Heart left ventricle (tissue), 16 donors: ENCODE measurements at regions of chr12 and their contacts with region 1.

Region 1: DNA sequence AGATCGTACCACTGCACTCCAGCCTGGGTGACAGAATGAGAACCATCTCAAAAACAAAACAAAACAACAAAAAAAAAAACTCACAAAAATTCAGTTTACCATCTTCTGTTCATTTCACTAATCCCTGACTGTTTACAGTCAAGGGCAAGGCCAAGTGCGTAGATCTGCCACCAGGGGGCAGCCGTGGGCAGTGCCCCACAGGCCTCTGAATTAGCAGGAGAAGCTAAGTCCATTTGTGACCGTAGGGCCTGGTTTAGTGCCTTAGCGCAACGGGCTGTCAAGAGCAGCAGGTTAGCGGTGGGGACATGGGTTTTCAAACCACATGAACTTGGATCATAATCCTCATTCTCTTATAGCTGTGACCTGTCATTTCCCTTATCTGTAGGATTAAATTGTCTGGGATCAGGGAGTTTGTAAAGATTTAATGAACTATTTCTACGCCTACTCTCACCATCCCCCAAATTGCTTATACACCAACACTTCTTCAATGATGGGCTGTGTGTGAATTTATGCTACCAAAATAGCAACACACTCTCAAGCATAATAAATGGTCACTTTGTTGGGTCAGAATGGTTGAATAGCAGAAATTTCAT is 49.0 kb downstream of the KCTD10 start:
- DNase-seq: peak; percentile 75 to 90 (median 80)
- ATAC-seq: peak; percentile 73 to 92 (median 91)
- H3K4me3 ChIP-seq: no peak overlapping the region
- H3K27ac ChIP-seq: no peak overlapping the region
- H3K4me1 ChIP-seq: peaks cover 0 to 8% (median 6%) of the 10 kb centered on the region in 12 donors
- H3K27me3 ChIP-seq: peaks cover 0 to 4% (median 0%) of the 10 kb centered on the region in 9 donors
- CTCF ChIP-seq: peak; percentile 97 to 99 (median 99)
- POLR2A ChIP-seq: no peak

Region 2: GRCh38 chr12:109458771-109459208 is 30.7 kb after region 1 on chr12:
- intact Hi-C with region 1: no loop called
- DNase-seq: no peak
- ATAC-seq: no peak
- H3K4me3 ChIP-seq: no peak overlapping the region
- H3K27ac ChIP-seq: peak overlapping the region; percentile 8 to 98 (median 96)
- H3K4me1 ChIP-seq: peaks cover 30 to 72% (median 56%) of the 10 kb centered on the region in 12 donors
- H3K27me3 ChIP-seq: no peaks in the 10 kb centered on the region
- CTCF ChIP-seq: no peak
- POLR2A ChIP-seq: no peak

Region 3: GRCh38 chr12:109477185-109477962 is 49.2 kb after region 1 on chr12 and contains the starts of genes KCTD10 and UBE3B:
- intact Hi-C with region 1: loop called (anchors 1 to 5 kb)
- DNase-seq: peak; percentile 91 to 93 (median 92)
- ATAC-seq: peak; percentile 98 to 99 (median 98)
- H3K4me3 ChIP-seq: peak within 1 kb of the TSS; percentile 59 to 92 (median 82)
- H3K27ac ChIP-seq: peak within 1 kb of the TSS; percentile 91 to 99 (median 98)
- H3K4me1 ChIP-seq: peaks cover 12 to 65% (median 43%) of the 10 kb centered on the region in 12 donors
- H3K27me3 ChIP-seq: no peaks in the 10 kb centered on the region
- CTCF ChIP-seq: peak in 4 of 12 donors; percentile 9 to 26 (median 20)
- POLR2A ChIP-seq: peak in 1 of 2 donors; percentile 50
- total RNA-seq, gene KCTD10: 20.8 to 52.3 (median 37.1) TPM
- total RNA-seq, gene UBE3B: 45.7 to 82.7 (median 53.8) TPM

Region 4: GRCh38 chr12:109512608-109513007 is 84.5 kb after region 1 on chr12:
- intact Hi-C with region 1: no loop called
- DNase-seq: no peak
- ATAC-seq: no peak
- H3K4me3 ChIP-seq: no peak overlapping the region
- H3K27ac ChIP-seq: no peak overlapping the region
- H3K4me1 ChIP-seq: peaks cover 0 to 7% (median 0%) of the 10 kb centered on the region in 12 donors
- H3K27me3 ChIP-seq: no peaks in the 10 kb centered on the region
- CTCF ChIP-seq: no peak
- POLR2A ChIP-seq: no peak

Region 5: GRCh38 chr12:109573029-109573913 is 145.1 kb after region 1 on chr12 and contains the starts of genes MMAB and MVK:
- intact Hi-C with region 1: loop called in 1 of 10 experiments (anchors 5 kb)
- DNase-seq: peak; percentile 99
- ATAC-seq: peak; percentile 98 to 99 (median 98)
- H3K4me3 ChIP-seq: peak within 1 kb of the TSS; percentile 60 to 93 (median 74)
- H3K27ac ChIP-seq: peak within 1 kb of the TSS; percentile 47 to 92 (median 82)
- H3K4me1 ChIP-seq: peaks cover 0 to 26% (median 18%) of the 10 kb centered on the region in 12 donors
- H3K27me3 ChIP-seq: no peaks in the 10 kb centered on the region
- CTCF ChIP-seq: no peak
- POLR2A ChIP-seq: peak in 1 of 2 donors; percentile 50
- total RNA-seq, gene MMAB: 29.5 to 43.3 (median 34.4) TPM
- total RNA-seq, gene MVK: 7.9 to 14.9 (median 10.1) TPM

Region 6: DNA sequence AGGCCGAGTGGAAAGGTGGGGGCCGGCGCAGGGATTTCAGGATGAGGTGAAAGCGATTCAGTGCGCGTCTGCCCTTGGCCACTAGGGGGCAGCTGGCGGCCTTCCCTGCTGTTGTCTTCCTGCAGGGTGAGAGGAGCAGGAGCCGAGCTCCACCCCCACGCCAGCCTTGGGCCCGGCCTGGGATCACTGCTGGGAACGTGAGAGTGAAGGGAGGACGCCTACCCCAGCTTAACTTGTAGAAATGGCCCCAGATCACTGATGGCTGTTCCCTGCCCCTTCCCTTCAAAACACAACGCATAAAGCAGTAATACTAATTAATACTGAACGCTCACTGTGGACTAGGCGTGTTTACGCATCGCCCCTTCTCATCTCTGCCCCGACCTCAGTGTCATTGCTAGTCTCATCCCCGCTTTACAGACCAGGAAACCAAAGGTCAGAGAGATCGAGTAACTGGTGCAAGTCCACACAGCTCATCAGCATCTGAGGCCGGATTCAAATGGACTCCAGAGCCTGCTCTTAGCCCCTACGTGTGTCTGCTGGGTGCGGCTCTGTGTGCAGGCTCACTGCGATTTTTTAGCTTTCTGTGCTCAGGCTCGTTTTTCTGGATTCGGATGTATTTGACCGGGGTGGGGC is 169.8 kb after region 1 on chr12:
- intact Hi-C with region 1: loop called in 3 of 10 experiments (anchors 10 kb)
- DNase-seq: peak; percentile 86 to 93 (median 90)
- ATAC-seq: peak; percentile 84 to 90 (median 88)
- H3K4me3 ChIP-seq: no peak overlapping the region
- H3K27ac ChIP-seq: no peak overlapping the region
- H3K4me1 ChIP-seq: peaks cover 0 to 18% (median 6%) of the 10 kb centered on the region in 12 donors
- H3K27me3 ChIP-seq: peaks cover 0 to 2% (median 0%) of the 10 kb centered on the region in 9 donors
- CTCF ChIP-seq: peak; percentile 92 to 98 (median 96)
- POLR2A ChIP-seq: no peak

Region 7: GRCh38 chr12:109775172-109775881 is 347.2 kb after region 1 on chr12:
- intact Hi-C with region 1: loop called (anchors 2 to 10 kb)
- DNase-seq: peak; percentile 67 to 84 (median 68)
- ATAC-seq: peak; percentile 75 to 86 (median 80)
- H3K4me3 ChIP-seq: no peak overlapping the region
- H3K27ac ChIP-seq: no peak overlapping the region
- H3K4me1 ChIP-seq: peaks cover 0 to 16% (median 0%) of the 10 kb centered on the region in 12 donors
- H3K27me3 ChIP-seq: peaks cover 0 to 2% (median 0%) of the 10 kb centered on the region in 9 donors
- CTCF ChIP-seq: peak; percentile 78 to 96 (median 86)
- POLR2A ChIP-seq: no peak

Region 8: DNA sequence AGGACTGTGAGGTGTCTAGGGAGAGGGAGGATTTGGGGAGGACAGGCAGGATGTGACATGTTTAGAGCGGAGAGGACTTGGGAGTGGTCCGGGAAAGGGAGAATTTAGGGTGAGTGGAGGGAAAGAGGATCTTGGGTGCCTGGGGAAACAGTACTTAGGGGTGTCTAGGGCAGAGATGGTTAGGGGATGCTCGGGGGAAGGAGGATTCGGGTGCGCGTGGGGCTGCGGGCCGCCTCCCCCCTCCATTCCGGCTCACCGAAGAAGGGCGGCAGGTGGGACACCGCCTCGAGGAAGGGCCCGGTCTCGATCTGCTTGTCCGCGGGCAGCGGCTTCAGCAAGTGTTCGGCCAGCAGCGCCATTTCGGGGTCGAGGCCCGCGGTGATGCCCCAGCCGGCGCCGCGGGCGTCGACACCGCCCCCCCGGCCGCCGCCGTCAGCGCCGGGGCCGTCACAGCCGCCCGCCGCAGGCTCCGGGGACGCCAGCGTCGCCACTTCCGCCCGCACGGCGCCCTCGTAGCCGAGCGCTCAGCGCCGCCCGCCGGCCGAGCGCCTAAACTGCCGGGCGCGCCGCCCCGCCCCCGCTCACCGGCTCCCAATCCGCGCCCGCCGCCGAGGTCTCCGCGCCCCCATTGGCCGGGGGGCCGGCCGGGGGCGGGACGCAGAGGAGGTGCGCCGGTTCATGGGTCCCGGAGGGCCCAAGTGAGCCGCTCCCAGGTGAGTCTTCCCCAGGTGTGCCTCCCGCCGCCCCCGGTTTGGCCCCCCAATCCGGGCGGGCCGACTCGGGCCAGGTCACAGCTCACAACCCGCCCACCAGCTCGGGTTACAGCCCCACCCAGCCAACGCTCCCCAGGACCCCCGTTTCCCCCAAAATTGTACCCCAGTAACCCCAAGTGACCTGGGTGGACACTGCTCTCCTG is 452.1 kb after region 1 on chr12 and contains the start of gene GLTP:
- intact Hi-C with region 1: loop called in 1 of 10 experiments (anchors 5 kb)
- DNase-seq: peak; percentile 89 to 94 (median 89)
- ATAC-seq: peak; percentile 88 to 98 (median 96)
- H3K4me3 ChIP-seq: peak within 1 kb of the TSS; percentile 60 to 93 (median 80)
- H3K27ac ChIP-seq: peak within 1 kb of the TSS in 11 of 12 donors; percentile 54 to 87 (median 77)
- H3K4me1 ChIP-seq: peaks cover 0 to 35% (median 16%) of the 10 kb centered on the region in 12 donors
- H3K27me3 ChIP-seq: no peaks in the 10 kb centered on the region
- CTCF ChIP-seq: peak in 11 of 12 donors; percentile 13 to 88 (median 68)
- POLR2A ChIP-seq: peak in 1 of 2 donors; percentile 52
- total RNA-seq, gene GLTP: 18.0 to 68.6 (median 25.1) TPM